ENCODE measurements at regions of chr17 and their contacts with region 1.

Region 1: DNA sequence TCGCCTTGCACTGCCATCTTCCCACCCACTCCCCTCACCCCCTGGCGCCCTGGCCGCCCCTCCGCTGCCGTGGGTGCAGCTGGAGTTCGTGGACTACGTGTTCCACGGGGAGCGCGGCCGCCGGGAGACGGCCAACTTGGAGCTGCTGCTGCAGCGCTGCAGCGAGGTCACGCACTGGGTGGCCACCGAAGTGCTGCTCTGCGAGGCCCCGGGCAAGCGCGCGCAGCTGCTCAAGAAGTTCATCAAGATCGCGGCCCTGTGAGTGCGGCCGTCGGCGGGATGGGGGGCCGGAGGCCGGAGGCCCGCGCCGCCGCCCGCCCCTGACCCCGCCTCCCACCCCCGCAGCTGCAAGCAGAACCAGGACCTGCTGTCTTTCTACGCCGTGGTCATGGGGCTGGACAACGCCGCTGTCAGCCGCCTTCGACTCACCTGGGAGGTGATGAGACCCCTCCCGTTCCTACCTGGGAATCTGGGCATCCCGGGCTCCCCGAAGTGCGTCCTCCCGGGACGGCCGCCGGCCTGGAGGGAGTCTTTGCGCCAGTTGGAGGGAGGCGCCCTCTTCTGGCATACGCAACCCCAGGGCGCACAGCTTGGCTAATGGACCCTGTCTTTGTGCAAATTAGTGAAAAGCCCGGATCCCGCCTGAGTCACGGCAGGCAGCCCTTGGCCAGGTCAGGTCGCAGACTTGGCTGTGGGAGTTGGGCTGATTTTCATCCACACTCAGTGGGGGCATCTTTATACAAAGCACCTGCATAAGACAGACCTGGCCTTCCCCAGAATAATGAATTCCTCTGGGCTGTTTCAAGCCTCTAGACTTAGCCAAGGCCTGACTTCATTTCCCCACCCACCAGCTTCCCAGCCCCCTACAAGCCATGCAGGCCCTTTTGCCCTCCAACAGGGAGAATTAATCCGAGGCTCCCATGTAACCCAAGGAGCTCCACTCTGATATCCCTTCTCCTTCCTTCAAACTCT is 14.3 kb downstream of the RAPGEFL1 start:
- DNase-seq: peak; percentile 78
- H3K4me3 ChIP-seq: peak overlapping the region; percentile 46
- CTCF ChIP-seq: peak; percentile 85

Region 2: GRCh38 chr17:40062329-40063186 is 129.0 kb before region 1 on chr17 and contains the start of gene THRA:
- in situ Hi-C with region 1: loop called (anchors 25 kb)
- DNase-seq: peak; percentile 22
- H3K4me3 ChIP-seq: peak within 1 kb of the TSS; percentile 88
- CTCF ChIP-seq: no peak

Region 3: GRCh38 chr17:40287494-40288369 is 96.2 kb after region 1 on chr17 and contains the start of gene CDC6:
- in situ Hi-C with region 1: loop called (anchors 25 kb)
- DNase-seq: peak; percentile 99
- H3K4me3 ChIP-seq: peak within 1 kb of the TSS; percentile 70
- CTCF ChIP-seq: no peak

Measured in astrocyte of the spinal cord (primary cell).